ENCODE measurements at regions of chr3 and their contacts with region 1.

Region 1: DNA sequence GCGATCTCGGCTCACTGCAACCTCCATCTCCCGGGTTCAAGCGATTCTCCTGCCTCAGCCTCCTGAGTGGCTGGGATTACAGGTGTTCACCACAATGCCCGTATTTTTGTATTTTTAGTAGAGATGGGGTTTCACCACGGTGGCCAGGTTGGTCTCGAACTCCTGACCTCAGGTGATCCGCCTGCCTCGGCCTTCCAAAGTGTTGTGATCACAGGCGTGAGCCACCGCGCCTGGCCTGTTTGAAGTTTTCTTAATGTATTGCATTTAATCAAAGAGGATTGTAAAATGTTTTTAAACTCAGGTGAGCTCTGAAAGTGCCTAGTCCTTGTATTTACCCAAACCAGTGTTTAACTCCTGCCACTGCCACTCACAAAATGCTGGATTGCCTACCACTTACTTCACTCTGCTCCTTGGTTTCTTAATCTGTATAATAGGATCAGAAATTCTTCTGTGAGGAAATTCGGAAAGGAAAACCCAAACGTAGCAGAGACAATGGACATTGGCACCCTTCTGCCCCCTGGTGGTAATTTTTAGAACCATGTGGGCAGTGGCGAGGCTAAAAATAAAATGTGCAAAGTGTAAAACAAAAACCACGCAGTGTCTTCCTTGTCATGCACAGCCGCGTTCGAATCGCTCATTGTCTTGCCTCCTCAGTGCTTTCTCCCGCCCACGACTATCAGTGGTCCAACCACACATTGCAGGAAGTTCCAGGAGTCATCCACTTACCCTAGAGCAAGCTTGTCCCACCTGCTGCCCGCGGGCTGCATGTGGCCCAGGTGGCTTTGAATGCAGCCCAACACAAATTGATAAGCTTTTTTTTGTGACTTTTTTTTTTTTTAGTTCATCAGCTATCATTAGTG is 27.3 kb downstream of the CEP19 start:
- DNase-seq: no peak
- H3K4me3 ChIP-seq: no peak overlapping the region
- CTCF ChIP-seq: peak; percentile 66

Region 2: GRCh38 chr3:196528639-196529233 is 156.0 kb before region 1 on chr3:
- CTCF ChIA-PET with region 1: interaction called, 21 read pairs
- POLR2A ChIA-PET with region 1: no interaction called
- DNase-seq: no peak
- H3K4me3 ChIP-seq: peak overlapping the region; percentile 57
- CTCF ChIP-seq: peak; percentile 82

Region 3: GRCh38 chr3:196638861-196639482 is 45.8 kb before region 1 on chr3:
- CTCF ChIA-PET with region 1: interaction called, 15 read pairs
- POLR2A ChIA-PET with region 1: no interaction called
- DNase-seq: no peak
- H3K4me3 ChIP-seq: no peak overlapping the region; the same call in 1 of the 2 replicates
- CTCF ChIP-seq: no peak

Region 4: GRCh38 chr3:196662711-196663571 is 21.8 kb before region 1 on chr3:
- CTCF ChIA-PET with region 1: interaction called, 14 read pairs
- POLR2A ChIA-PET with region 1: no interaction called
- DNase-seq: no peak
- H3K4me3 ChIP-seq: no peak overlapping the region; the same call in 1 of the 2 replicates
- CTCF ChIP-seq: no peak

Region 5: DNA sequence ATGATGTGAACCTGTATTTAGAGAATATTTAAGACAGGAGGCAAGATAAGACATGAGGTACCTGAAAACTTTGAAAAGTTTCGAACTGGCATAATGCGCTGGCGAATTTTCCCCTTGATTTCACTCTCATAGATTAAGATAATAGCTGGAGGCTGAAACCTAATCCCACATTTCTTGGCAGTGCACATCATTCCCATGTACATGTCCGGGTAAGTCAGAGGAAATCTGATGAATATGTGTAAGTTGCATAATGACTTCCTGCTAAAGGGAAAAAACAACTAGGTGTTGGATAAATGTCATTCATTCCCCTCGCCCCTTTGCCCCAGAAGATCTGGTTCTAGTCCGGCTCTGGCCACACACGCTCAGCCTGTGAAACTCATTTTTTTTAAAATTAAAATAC is 23.7 kb after region 1 on chr3:
- CTCF ChIA-PET with region 1: interaction called, 36 read pairs
- POLR2A ChIA-PET with region 1: no interaction called
- DNase-seq: no peak
- H3K4me3 ChIP-seq: no peak overlapping the region
- CTCF ChIP-seq: no peak